AG04450 (cell line): ENCODE measurements at regions of chr7 and their contacts with region 1.

Region 1: GRCh38 chr7:12436896-12437535 is 33.4 kb upstream of the VWDE start:
- DNase-seq: no peak
- H3K4me3 ChIP-seq: no peak overlapping the region
- H3K27ac ChIP-seq: no peak overlapping the region
- H3K27me3 ChIP-seq: no peaks in the 10 kb centered on the region
- CTCF ChIP-seq: peak; percentile 24

Region 2: DNA sequence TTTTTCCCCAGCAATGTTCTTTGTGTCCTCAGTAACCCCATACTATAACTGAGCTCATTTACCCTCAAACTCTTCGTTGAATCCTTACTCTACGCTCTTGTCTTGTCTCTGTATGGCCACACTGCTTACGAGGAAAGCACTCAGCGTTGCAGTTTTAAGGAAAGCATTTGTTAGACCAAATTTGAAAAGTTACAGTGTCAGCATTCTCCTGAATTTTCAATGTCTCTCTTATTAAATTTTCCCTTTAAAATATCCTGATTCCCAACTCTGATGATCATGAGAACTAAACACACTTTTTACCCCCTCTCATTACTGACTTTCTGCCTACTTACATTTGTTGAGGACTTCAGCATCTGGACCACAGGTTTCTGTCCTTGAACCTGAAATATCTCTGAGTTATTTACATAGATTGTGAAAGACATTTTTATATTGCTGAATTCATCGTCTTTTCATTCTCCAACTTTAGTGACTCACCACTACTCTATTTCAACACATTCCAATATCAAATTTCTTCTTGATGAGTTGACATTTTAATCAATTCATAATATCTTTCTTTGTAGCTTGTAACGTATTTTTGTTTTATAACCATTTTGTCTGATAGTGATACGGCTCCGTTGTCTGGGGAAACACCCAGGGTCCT is 13.5 kb before region 1 on chr7:
- CTCF ChIA-PET with region 1: interaction called, 12 read pairs
- POLR2A ChIA-PET with region 1: interaction called, 4 read pairs
- DNase-seq: no peak
- H3K4me3 ChIP-seq: no peak overlapping the region
- H3K27ac ChIP-seq: no peak overlapping the region
- H3K27me3 ChIP-seq: no peaks in the 10 kb centered on the region
- CTCF ChIP-seq: no peak

Region 3: DNA sequence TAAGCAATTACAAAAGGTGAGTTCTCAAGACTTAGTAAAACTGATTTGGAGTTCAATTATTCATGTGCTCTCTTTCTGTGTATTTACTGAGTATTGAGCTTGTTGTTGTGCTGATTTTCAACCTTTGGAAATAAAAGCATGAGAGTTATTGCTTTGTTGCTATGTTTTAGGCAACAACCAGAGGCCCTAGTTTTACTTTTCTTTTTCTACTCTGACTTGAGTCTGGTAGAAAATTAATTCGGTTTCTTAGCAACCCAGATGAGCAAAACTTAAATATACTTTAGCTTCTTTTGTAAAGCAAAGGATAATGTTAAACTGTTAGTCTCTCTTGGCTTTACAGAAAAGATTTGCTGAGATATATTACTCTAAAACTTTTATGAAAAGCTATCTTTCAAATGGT is 67.1 kb after region 1 on chr7:
- CTCF ChIA-PET with region 1: no interaction called
- POLR2A ChIA-PET with region 1: no interaction called
- DNase-seq: no peak
- H3K4me3 ChIP-seq: no peak overlapping the region
- H3K27ac ChIP-seq: no peak overlapping the region
- H3K27me3 ChIP-seq: no peaks in the 10 kb centered on the region
- CTCF ChIP-seq: no peak

Region 4: GRCh38 chr7:12540850-12541249 is 103.8 kb after region 1 on chr7:
- CTCF ChIA-PET with region 1: no interaction called
- POLR2A ChIA-PET with region 1: no interaction called
- DNase-seq: no peak
- H3K4me3 ChIP-seq: no peak overlapping the region
- H3K27ac ChIP-seq: no peak overlapping the region
- H3K27me3 ChIP-seq: no peaks in the 10 kb centered on the region
- CTCF ChIP-seq: no peak